ENCODE measurements at regions of chr3 and their contacts with region 1.

Region 1: GRCh38 chr3:59212128-59212779 is 162.4 kb upstream of the CFAP20DC start:
- DNase-seq: peak; percentile 28
- H3K4me3 Mint-ChIP-seq: no peak overlapping the region
- H3K27ac Mint-ChIP-seq: no peak overlapping the region
- H3K4me1 Mint-ChIP-seq: no peaks in the 10 kb centered on the region
- H3K27me3 Mint-ChIP-seq: no peaks in the 10 kb centered on the region
- CTCF ChIP-seq: peak; percentile 35

Region 2: GRCh38 chr3:58824285-58824684 is 388.0 kb before region 1 on chr3:
- CTCF ChIA-PET with region 1: no interaction called
- intact Hi-C with region 1: loop called (anchors 2 kb)
- DNase-seq: peak; percentile 70
- H3K4me3 Mint-ChIP-seq: no peak overlapping the region
- H3K27ac Mint-ChIP-seq: no peak overlapping the region
- H3K4me1 Mint-ChIP-seq: peaks cover 11% of the 10 kb centered on the region
- H3K27me3 Mint-ChIP-seq: no peaks in the 10 kb centered on the region
- CTCF ChIP-seq: peak; percentile 46

Region 3: GRCh38 chr3:59575113-59576001 is 363.1 kb after region 1 on chr3:
- CTCF ChIA-PET with region 1: no interaction called
- intact Hi-C with region 1: loop called (anchors 2 kb)
- DNase-seq: peak; percentile 80
- H3K4me3 Mint-ChIP-seq: no peak overlapping the region
- H3K27ac Mint-ChIP-seq: no peak overlapping the region
- H3K4me1 Mint-ChIP-seq: no peaks in the 10 kb centered on the region
- H3K27me3 Mint-ChIP-seq: peaks cover 8% of the 10 kb centered on the region
- CTCF ChIP-seq: peak; percentile 80

Region 4: DNA sequence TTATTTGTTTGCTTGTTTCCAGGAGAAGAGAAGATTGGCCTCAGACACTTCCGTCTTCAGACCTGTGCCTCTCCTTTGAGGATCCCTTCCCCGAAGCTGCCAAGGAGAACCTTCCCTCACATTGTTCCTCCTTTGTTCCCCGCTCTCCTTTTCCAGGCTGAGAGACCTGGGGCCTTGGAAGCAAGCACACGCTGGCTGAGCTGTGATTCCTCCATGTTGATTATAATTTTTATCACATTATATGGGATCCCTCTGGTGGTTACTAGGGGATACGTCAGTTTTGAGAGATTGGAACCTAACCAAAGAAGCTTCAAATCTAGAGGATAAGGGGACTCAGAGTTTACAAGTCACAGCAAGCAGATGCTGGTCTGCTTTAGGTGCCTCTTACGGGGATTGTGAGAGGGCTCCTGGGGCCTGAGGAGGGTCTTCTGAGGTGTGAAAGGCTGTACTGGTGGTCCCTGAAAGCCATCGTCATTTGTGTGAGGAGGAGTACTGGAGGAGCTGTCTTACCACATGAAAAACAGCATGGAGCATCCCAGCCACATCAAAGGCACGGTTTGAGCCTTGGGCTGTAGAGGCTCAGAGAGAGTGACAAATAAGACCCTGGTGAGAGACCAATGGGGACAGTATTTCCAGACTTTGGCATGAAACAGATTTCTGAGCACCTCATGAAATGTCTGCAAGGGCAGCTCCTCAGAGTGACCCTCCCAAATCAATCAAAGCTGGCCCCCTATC is 597.6 kb after region 1 on chr3:
- CTCF ChIA-PET with region 1: no interaction called
- intact Hi-C with region 1: loop called (anchors 5 kb)
- DNase-seq: no peak
- H3K4me3 Mint-ChIP-seq: no peak overlapping the region
- H3K27ac Mint-ChIP-seq: no peak overlapping the region
- H3K4me1 Mint-ChIP-seq: no peaks in the 10 kb centered on the region
- H3K27me3 Mint-ChIP-seq: no peaks in the 10 kb centered on the region
- CTCF ChIP-seq: no peak

Region 5: DNA sequence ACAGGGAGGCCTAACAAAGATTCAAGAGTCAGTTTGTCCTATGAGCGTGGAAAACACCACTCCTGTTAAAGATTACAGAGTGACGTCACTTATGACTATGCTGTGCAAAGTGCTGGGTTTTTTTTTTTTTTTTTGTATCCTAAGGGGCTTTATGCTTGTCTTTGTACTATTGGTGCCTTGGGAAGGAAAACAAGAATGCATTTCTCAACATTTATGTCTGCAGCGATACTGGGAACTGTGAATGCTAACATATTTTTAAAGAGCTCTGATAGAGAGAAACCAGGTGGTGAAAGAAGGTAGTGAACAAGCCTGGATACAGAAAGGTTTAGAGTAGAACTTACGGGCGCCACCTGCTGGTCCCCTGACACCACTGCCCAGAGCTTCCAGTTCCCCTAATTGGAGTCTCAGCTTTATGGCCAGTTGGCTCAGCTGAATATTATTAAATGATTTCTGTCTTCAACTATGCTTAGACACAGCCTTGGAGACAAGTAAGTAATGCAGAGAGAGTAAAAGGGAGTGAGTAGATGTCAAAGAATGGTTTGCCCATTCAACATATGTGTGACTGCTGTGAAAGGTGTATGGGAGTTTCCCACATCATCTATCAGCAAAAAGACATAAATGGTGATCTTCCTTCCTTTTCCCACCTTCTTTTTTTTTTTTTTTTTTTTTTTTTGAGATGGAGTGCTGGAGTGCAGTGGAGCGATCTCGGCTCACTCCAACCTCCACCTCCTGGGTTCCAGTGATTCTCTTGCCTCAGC is 645.5 kb after region 1 on chr3:
- CTCF ChIA-PET with region 1: interaction called, 3 read pairs
- intact Hi-C with region 1: loop called (anchors 1 kb)
- DNase-seq: peak; percentile 73
- H3K4me3 Mint-ChIP-seq: peak overlapping the region; percentile 27
- H3K27ac Mint-ChIP-seq: peak overlapping the region; percentile 54
- H3K4me1 Mint-ChIP-seq: no peaks in the 10 kb centered on the region
- H3K27me3 Mint-ChIP-seq: no peaks in the 10 kb centered on the region
- CTCF ChIP-seq: peak; percentile 77